Colonic mucosa (tissue), 4 donors: ENCODE measurements at regions of chr3 and their contacts with region 1.

Region 1: DNA sequence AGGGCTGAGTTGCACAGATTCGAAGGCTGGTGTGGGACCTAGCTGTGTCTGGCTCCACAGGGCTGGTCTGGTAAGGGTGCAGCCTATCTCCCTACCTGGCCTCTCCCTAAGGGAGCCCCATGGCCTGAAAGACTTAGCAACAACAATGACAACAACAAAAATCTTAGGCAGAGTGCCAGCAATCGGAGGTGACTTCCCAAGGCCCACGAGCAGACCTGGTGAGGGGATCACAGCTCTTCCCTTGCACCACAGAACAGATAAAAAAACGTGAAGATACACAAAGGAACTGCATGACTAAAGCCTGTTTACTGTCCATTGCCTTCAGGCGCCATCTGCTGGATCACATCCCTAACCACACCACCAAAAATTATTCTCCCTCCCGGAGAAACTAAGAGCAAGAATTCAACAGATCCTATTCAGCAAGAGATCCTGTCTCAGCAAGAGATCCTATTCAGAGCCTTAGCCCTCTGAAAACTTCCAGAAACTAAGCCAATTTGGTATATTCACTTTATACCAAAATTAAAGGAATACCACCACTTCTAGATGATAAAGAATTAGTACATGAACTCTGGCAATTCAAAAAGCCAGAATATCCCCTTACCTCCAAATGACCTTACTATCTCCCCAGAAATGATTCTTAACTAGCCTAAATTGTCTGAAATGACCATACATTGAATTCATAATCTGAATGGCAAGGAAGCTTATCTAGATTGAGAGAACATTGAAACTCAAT is 24.1 kb upstream of the OR5K4 start:
- DNase-seq: peak; percentile 20
- H3K4me3 ChIP-seq: no peak overlapping the region
- H3K27ac ChIP-seq: no peak overlapping the region
- H3K4me1 ChIP-seq: no peaks in the 10 kb centered on the region
- H3K27me3 ChIP-seq: no peaks in the 10 kb centered on the region
- CTCF ChIP-seq: peak; percentile 23

Region 2: GRCh38 chr3:98039322-98040024 is 290.1 kb before region 1 on chr3:
- intact Hi-C with region 1: loop called (anchors 2 kb)
- DNase-seq: peak; percentile 58
- H3K4me3 ChIP-seq: no peak overlapping the region
- H3K27ac ChIP-seq: no peak overlapping the region
- H3K4me1 ChIP-seq: no peaks in the 10 kb centered on the region
- H3K27me3 ChIP-seq: no peaks in the 10 kb centered on the region
- CTCF ChIP-seq: peak; percentile 92

Region 3: GRCh38 chr3:98376631-98377030 is 47.1 kb after region 1 on chr3:
- intact Hi-C with region 1: no loop called
- DNase-seq: no peak
- H3K4me3 ChIP-seq: no peak overlapping the region
- H3K27ac ChIP-seq: no peak overlapping the region
- H3K4me1 ChIP-seq: no peaks in the 10 kb centered on the region
- H3K27me3 ChIP-seq: no peaks in the 10 kb centered on the region
- CTCF ChIP-seq: no peak